ENCODE measurements at regions of chr11 and their contacts with region 1.

Region 1: DNA sequence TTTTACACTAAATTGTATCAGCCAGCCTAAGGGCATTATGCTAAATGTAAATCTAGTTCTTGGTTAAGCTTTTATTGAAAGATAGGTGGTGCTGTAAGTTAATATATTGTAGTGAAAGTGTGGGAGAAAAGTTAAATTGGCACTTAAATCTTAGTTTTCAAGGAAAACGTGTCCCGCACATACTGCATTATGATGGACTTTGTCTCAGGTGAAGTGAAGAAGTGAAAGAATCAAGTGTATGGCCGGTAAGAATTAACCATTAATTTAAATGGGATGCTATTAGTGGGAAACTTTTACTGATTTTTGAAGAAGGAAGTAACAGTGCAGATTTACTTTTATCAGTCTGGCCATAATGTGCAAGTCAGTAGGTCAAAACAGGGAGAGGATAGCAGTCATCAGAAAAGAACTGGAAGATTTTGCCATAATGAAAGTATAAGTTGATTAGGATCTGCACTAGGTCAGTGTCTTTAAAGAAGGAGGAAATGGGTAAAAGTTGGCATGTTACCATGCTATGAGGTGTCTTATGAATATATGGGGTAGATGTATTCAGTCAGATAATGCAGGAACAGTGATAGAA is 81.6 kb downstream of the PDHX start:
- DNase-seq: no peak
- ATAC-seq: peak; percentile 55
- H3K4me3 ChIP-seq: no peak overlapping the region
- H3K4me1 ChIP-seq: no peaks in the 10 kb centered on the region
- CTCF ChIP-seq: no peak

Region 2: GRCh38 chr11:35391922-35392813 is 394.1 kb after region 1 on chr11:
- intact Hi-C with region 1: loop called (anchors 5 to 10 kb)
- DNase-seq: peak; percentile 79 to 89 (median 85)
- ATAC-seq: peak; percentile 79
- H3K4me3 ChIP-seq: no peak overlapping the region
- H3K4me1 ChIP-seq: peaks cover 19% of the 10 kb centered on the region
- CTCF ChIP-seq: peak; percentile 45

Measured in mucosa of descending colon (tissue), 3 donors.